AG04450 (cell line): ENCODE measurements at regions of chr7 and their contacts with region 1.

Region 1: GRCh38 chr7:140607441-140607989 is 33.1 kb downstream of the DENND2A start:
- DNase-seq: no peak
- H3K4me3 ChIP-seq: no peak overlapping the region
- H3K27ac ChIP-seq: peak overlapping the region; percentile 100
- H3K27me3 ChIP-seq: no peaks in the 10 kb centered on the region
- CTCF ChIP-seq: no peak

Region 2: GRCh38 chr7:140625908-140626868 is 18.7 kb after region 1 on chr7:
- CTCF ChIA-PET with region 1: interaction called, 4 read pairs
- POLR2A ChIA-PET with region 1: interaction called, 33 read pairs
- DNase-seq: peak; percentile 99
- H3K4me3 ChIP-seq: no peak overlapping the region
- H3K27ac ChIP-seq: peak overlapping the region; percentile 100
- H3K27me3 ChIP-seq: no peaks in the 10 kb centered on the region
- CTCF ChIP-seq: no peak